Activated CD8-positive, alpha-beta T cell treated with anti-CD3 and anti-CD28 coated beads, Interleukin-2, amount 10 ng/mL, durations not matched to agents 7 days and 5 days (primary cell): ENCODE measurements at regions of chr5 and their contacts with region 1.

Region 1: DNA sequence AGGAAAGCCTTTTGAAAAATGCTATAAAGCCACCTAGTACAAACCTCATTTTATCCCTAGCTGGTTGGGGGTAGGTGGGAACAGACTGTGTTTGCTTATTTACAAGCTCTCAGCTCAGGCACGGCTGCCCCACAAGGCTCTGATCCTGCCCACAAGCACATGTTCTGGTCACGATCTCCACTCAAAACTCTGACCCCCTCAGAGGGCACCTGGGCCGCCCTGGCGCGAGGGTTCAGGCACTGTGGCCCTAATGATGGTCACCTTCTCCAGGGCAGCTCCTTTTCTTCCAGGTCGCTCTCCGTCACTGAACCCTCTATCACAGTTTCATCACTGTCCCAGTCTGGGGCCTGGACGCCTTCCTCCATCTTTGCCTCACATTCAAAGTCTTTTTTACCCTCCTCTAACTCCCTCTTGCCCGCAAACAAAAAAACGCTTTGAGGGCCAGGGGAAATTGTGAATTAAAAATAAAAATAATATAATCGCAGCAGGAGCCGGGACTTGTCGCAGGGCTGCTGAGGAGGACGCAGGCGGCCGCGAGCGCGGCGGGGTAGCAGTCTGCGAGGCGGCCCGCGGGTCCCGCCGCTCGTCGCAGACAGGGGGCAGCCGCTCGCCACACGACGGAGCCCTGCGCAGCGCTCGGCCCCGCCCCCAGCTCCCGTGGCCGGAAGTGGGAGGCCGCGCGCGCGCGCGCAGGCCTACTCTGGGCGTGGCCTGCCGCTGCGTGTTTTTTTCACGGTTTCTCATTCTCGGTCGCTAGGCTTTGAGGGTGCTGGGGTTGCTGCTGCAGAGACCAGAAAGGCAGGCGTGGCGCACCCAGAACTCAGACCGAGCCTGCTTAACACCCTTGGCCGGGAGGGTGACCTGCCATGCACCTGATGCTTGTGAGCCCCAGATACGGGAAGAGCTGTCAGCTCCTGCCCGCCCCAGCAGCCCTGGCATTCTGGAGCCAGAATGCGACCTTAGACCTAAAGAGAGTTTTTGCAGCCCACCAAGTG is at the start of gene ANKRD31:
- DNase-seq: peak; percentile 89
- ATAC-seq: peak; percentile 98
- H3K4me3 Mint-ChIP-seq: peak within 1 kb of the TSS; percentile 85
- H3K27ac Mint-ChIP-seq: peak within 1 kb of the TSS; percentile 89
- H3K4me1 Mint-ChIP-seq: peaks cover 18% of the 10 kb centered on the region
- H3K27me3 Mint-ChIP-seq: no peaks in the 10 kb centered on the region
- total RNA-seq, gene ANKRD31: 0.23 to 0.26 TPM

Region 2: GRCh38 chr5:74919487-74919886 is 317.1 kb before region 1 on chr5:
- CTCF ChIA-PET with region 1: interaction called, 12 read pairs
- POLR2A ChIA-PET with region 1: no interaction called
- DNase-seq: no peak
- ATAC-seq: no peak
- H3K4me3 Mint-ChIP-seq: no peak overlapping the region
- H3K27ac Mint-ChIP-seq: no peak overlapping the region
- H3K4me1 Mint-ChIP-seq: no peaks in the 10 kb centered on the region
- H3K27me3 Mint-ChIP-seq: peaks cover 7% of the 10 kb centered on the region

Region 3: DNA sequence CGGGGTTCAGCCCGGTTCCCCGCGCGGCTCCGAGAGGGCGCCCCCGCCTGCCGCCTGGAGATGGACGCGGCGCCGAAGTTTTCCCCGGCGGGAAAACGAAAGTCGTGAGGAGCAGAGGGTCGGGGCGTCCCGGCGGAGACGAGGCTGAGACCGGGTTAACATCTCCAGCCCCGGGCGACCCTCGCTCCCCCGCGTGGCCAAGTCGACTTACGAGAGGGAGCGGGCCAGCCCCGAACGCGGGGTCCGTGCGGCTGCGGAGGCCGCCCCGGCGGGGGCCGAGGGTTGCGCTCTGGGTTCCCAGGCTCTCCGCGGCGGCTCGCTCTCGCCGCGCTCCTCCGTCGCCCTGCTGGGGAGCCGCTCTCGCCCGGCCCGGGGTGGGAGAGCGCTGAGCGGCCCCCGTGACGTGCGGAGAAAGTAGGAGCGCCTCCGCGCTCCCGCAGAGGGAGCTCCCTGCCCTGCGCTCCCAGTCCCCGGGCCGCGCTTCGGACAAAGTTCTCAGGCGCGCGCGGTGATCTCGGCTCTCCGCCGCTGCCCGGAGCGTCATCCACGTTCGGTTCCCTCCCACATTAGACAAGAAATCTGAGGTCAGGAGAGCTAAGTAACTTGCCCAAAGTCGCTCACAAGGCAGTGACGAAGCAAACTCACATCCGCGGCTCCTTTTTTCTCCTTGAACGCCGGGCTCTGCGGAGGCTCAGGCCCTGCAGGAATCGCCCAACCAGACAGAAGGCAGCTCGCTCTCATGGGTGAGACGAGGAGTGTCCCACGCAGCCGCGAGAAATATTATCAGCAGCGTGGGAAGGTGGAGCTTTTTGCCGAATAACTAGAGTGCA is 183.1 kb before region 1 on chr5:
- CTCF ChIA-PET with region 1: interaction called, 74 read pairs
- POLR2A ChIA-PET with region 1: interaction called, 26 read pairs
- DNase-seq: peak; percentile 67
- ATAC-seq: peak; percentile 48
- H3K4me3 Mint-ChIP-seq: peak overlapping the region; percentile 83
- H3K27ac Mint-ChIP-seq: peak overlapping the region; percentile 90
- H3K4me1 Mint-ChIP-seq: peaks cover 75% of the 10 kb centered on the region
- H3K27me3 Mint-ChIP-seq: no peaks in the 10 kb centered on the region

Region 4: GRCh38 chr5:75336625-75337339 is 100.2 kb after region 1 on chr5 and contains the start of gene HMGCR:
- CTCF ChIA-PET with region 1: interaction called, 14 read pairs
- POLR2A ChIA-PET with region 1: interaction called, 28 read pairs
- DNase-seq: peak; percentile 99
- ATAC-seq: peak; percentile 98
- H3K4me3 Mint-ChIP-seq: no peak within 1 kb of the TSS
- H3K27ac Mint-ChIP-seq: no peak within 1 kb of the TSS
- H3K4me1 Mint-ChIP-seq: peaks cover 34% of the 10 kb centered on the region
- H3K27me3 Mint-ChIP-seq: no peaks in the 10 kb centered on the region
- total RNA-seq, gene HMGCR: 64.1 to 70.5 TPM

Region 5: GRCh38 chr5:75363726-75364495 is 127.3 kb after region 1 on chr5:
- CTCF ChIA-PET with region 1: no interaction called
- POLR2A ChIA-PET with region 1: no interaction called
- DNase-seq: no peak
- ATAC-seq: no peak
- H3K4me3 Mint-ChIP-seq: no peak overlapping the region
- H3K27ac Mint-ChIP-seq: no peak overlapping the region
- H3K4me1 Mint-ChIP-seq: no peaks in the 10 kb centered on the region
- H3K27me3 Mint-ChIP-seq: no peaks in the 10 kb centered on the region

Region 6: DNA sequence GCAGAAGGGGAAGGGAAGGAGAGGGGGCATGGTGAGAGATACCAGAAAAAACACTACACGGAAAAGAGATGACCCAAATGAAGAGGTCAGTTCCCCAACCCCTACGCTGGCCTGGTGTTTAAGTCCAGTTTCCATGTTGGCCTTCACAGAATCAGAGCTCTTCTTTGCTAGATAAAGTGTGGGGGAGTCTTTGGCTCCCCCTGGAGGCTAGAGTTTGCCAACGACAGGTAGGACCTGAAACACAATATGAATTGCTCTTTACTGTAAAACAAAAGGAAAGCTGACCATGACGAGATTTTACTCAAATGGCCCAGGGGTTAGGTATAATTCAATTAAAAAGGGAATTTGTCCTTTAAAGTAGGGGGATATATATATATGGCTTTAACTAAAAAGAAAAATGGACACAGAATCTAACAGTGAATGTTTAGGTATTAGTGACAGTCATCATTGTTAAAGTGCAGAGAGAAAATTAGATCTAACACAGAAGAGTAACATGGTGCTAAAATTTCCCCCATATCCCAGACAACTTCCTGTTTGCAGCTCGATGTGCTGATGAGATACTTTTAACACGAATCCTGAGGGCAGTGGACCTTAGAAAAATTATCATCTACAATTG is 938.5 kb after region 1 on chr5:
- CTCF ChIA-PET with region 1: interaction called, 11 read pairs
- POLR2A ChIA-PET with region 1: no interaction called
- DNase-seq: peak; percentile 74
- ATAC-seq: peak; percentile 68
- H3K4me3 Mint-ChIP-seq: no peak overlapping the region
- H3K27ac Mint-ChIP-seq: peak overlapping the region; percentile 84
- H3K4me1 Mint-ChIP-seq: peaks cover 22% of the 10 kb centered on the region
- H3K27me3 Mint-ChIP-seq: peaks cover 4% of the 10 kb centered on the region